Ascending aorta (tissue), 2 donors: ENCODE measurements at regions of chr20 and their contacts with region 1.

Region 1: DNA sequence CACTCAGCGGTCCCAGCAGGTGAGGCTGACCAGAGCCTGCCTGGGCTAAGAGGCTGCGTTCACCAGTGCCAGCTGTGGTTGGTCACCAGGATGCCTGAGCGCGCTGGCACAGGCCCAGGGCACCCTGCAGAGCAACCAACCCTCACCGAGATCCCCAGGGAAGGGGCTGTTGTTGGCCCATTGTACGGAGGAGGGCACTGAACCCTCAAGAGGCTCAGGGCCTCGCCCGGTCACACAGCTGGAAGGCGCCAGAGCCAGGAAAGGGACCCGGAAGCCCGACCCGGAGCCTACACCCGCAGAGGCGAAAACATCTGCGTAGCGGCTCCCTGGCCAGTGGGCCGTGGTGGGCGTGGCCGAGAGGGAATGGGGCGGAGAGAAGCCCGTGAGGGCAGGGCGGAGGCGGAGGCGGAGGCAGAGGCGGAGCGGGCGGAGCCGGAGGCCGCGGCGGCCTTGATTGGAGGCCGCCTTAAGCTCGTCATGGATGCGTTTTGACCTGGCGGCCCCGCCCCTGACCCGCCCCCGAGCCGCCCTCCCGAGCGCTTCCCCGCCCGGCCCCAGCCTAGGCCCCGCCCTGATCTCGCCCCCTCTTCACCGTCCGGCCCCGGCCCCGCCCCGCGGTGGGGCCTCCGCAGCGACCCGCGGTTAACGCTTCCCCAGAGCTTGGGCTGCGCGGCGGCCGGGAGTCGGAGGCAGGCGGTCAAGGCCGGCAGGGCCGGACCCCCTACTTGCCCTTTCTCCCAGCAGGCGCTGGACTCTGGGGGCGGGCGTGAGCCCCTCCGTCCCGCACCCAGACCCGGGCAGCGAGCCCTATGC is 2.2 kb upstream of the MRGBP start:
- DNase-seq: peak; percentile 79 to 97
- H3K4me3 ChIP-seq: peak overlapping the region; percentile 89
- H3K27ac ChIP-seq: peak overlapping the region; percentile 90 to 94
- H3K4me1 ChIP-seq: peaks cover 4 to 15% of the 10 kb centered on the region in 2 donors
- H3K27me3 ChIP-seq: no peaks in the 10 kb centered on the region
- CTCF ChIP-seq: no peak

Region 2: DNA sequence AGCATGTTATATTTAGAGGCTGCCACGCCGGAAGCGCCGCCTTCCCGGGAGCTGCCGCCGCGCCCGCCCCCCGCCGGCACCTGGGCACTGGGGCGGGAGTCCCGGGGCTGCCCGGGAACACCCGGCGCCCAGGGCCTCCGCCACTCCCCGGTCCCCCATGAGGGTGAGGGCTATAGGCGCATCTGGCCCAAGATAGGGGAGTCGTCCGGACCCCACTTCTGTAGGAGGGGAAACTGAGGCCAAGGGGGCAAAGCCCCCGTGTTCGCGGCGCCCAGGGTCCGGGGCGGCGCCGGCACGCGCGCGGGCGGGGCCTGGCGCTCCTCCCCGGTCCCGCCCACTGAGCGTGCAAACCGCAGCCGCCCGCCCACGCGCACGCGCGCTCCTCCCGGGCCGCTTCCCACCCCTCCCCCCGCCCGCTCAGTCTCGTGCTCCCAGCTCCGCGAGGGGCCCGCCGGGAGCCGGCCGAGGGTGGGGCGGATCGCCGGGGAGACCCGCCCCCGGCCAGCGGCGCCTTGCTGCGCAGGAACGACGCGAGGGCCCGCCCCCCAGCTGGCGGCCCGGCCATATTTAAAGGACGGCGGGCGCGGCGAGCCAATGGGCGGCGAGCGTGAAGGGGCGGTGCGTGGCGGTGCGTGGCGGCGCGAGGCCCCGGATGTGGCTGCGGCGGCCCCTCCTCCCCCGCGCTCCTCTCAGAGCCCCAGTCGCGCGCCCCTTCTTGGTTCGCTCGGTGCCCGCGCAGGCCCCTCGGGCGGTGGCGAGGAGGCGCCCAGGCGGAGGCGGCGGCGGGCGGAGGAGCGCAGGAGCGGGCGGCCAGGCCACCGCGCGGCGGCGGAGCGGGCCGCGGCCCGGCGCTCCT is 672.1 kb before region 1 on chr20 and contains the start of gene LSM14B:
- intact Hi-C with region 1: loop called (anchors 5 kb)
- DNase-seq: peak; percentile 84 to 98
- H3K4me3 ChIP-seq: peak within 1 kb of the TSS; percentile 70 to 84
- H3K27ac ChIP-seq: peak within 1 kb of the TSS; percentile 97 to 98
- H3K4me1 ChIP-seq: peaks cover 0 to 26% of the 10 kb centered on the region in 2 donors
- H3K27me3 ChIP-seq: no peaks in the 10 kb centered on the region
- CTCF ChIP-seq: no peak
- total RNA-seq, gene LSM14B: 27.6 TPM

Region 3: DNA sequence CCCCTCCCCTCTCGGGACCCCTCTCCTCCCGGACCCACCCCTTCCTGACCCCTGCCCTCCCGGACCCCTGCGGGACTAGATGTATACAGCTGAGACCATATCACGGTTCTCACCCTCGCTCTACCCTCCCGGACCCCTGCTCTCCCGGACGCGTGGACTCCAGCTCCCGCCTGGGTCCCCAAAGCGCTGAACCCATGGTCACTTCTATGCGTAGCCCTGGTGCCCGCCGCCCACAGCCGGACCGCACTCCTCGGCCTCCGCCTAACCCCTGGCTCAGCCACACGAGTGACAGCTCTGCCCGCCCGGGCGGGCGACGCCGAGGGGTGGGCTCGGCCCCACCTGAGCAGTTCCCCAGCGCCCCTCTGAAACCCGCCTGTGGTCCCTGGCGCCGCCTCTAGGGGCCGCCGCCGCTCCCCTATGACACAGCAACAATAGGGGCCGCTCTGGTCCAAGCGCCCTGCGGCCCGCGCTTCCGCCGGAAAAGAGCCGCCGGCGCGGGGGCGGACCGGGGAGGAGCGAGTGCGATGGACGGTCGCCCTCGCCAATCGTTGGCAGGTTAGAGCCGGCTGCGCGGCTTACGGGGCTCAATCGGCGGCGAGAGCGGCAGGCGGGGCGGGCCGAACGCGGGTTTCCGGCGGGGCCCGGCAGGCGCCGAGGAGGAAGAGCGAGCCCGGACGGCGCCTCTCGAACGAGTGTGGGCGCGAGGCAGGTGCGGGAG is 491.6 kb before region 1 on chr20 and contains the start of gene ADRM1:
- intact Hi-C with region 1: loop called (anchors 1 kb)
- DNase-seq: peak; percentile 82 to 98
- H3K4me3 ChIP-seq: peak within 1 kb of the TSS; percentile 70 to 92
- H3K27ac ChIP-seq: peak within 1 kb of the TSS; percentile 98 to 99
- H3K4me1 ChIP-seq: peaks cover 12 to 20% of the 10 kb centered on the region in 2 donors
- H3K27me3 ChIP-seq: no peaks in the 10 kb centered on the region
- CTCF ChIP-seq: peak; percentile 98 to 99 (median 99)
- total RNA-seq, gene ADRM1: 236 TPM

Region 4: GRCh38 chr20:62500237-62500864 is 293.8 kb before region 1 on chr20:
- intact Hi-C with region 1: loop called (anchors 1 kb)
- DNase-seq: peak in 1 of 2 donors; percentile 80
- H3K4me3 ChIP-seq: no peak overlapping the region
- H3K27ac ChIP-seq: no peak overlapping the region
- H3K4me1 ChIP-seq: no peaks in the 10 kb centered on the region
- H3K27me3 ChIP-seq: peaks cover 4% of the 10 kb centered on the region
- CTCF ChIP-seq: peak; percentile 75 to 90 (median 90)

Region 5: GRCh38 chr20:62808211-62808865 is 14.2 kb after region 1 on chr20:
- intact Hi-C with region 1: loop called (anchors 1 kb)
- DNase-seq: peak in 1 of 2 donors; percentile 84
- H3K4me3 ChIP-seq: no peak overlapping the region
- H3K27ac ChIP-seq: no peak overlapping the region
- H3K4me1 ChIP-seq: peaks cover 16 to 35% of the 10 kb centered on the region in 2 donors
- H3K27me3 ChIP-seq: no peaks in the 10 kb centered on the region
- CTCF ChIP-seq: peak; percentile 87 to 94 (median 90)

Region 6: DNA sequence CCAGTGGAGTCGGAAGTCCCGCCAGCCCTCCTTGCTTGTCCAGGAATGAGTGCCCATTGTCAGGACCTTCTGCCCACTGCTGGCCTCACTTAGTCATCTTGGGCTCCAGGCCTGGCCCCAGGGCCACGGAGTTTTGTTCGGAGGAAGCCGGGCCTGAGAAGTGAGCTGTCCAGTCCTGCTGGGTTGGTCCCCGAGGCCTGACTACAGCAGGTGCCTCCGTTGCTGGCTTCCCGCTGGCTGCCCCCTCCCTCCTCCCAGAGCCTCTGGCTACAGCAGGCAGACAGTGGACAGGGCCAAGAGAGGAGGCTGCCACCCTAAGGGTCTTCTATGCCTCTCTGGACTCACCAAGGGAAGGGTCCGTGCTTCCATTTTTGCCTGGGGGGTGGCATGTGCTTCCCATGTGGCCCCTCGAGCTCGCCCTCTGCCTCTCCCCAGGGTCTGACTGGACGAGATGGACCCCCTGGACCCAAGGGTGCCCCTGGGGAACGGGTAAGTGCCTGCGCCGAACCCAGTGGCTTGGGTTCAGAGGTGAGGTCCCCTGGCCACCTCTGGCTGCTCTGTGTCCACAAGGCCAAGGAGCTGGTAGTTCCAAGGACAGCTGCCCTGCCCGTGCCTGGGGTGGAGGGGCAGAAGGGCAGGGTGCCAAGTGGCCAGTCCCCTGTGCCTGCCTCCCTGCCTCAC is 25.5 kb after region 1 on chr20:
- intact Hi-C with region 1: no loop called
- DNase-seq: no peak
- H3K4me3 ChIP-seq: no peak overlapping the region
- H3K27ac ChIP-seq: peak overlapping the region; percentile 1 to 5
- H3K4me1 ChIP-seq: peaks cover 26 to 47% of the 10 kb centered on the region in 2 donors
- H3K27me3 ChIP-seq: peaks cover 17% of the 10 kb centered on the region
- CTCF ChIP-seq: no peak

Region 7: GRCh38 chr20:62926239-62927104 is 132.4 kb after region 1 on chr20 and contains the start of gene DIDO1:
- intact Hi-C with region 1: loop called (anchors 5 kb)
- DNase-seq: peak; percentile 52 to 89
- H3K4me3 ChIP-seq: peak within 1 kb of the TSS; percentile 79 to 97
- H3K27ac ChIP-seq: peak within 1 kb of the TSS; percentile 96 to 98
- H3K4me1 ChIP-seq: peaks cover 20 to 63% of the 10 kb centered on the region in 2 donors
- H3K27me3 ChIP-seq: no peaks in the 10 kb centered on the region
- CTCF ChIP-seq: peak; percentile 47 to 83 (median 70)
- total RNA-seq, gene DIDO1: 42.4 TPM

Region 8: DNA sequence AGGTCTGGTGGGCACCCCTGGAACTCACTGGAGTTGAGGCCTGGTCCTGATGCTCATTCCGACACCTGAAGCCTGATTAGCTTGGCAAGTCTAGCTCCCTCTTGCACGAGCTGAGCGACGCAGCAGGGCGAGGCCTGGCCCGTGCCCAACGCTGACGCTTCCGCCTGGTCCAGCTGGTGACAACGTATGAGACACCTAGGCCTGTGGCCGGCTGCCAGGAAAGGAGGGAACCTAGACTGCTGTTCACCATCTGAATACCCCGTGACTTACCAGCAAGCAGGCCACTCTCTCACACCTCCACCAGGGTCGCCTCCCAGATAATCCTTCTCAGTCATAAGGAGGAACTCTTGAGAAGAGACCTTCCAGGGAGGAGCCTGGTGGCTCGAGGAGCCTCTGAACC is 397.3 kb after region 1 on chr20:
- intact Hi-C with region 1: no loop called
- DNase-seq: no peak
- H3K4me3 ChIP-seq: no peak overlapping the region
- H3K27ac ChIP-seq: no peak overlapping the region
- H3K4me1 ChIP-seq: no peaks in the 10 kb centered on the region
- H3K27me3 ChIP-seq: no peaks in the 10 kb centered on the region
- CTCF ChIP-seq: no peak

Region 9: GRCh38 chr20:63864847-63865640 is 1070.9 kb after region 1 on chr20 and contains the start of gene TPD52L2:
- intact Hi-C with region 1: loop called (anchors 10 kb)
- DNase-seq: peak; percentile 95 to 99
- H3K4me3 ChIP-seq: peak within 1 kb of the TSS; percentile 77 to 92
- H3K27ac ChIP-seq: peak within 1 kb of the TSS; percentile 92 to 98
- H3K4me1 ChIP-seq: peaks cover 0 to 22% of the 10 kb centered on the region in 2 donors
- H3K27me3 ChIP-seq: no peaks in the 10 kb centered on the region
- CTCF ChIP-seq: peak in 1 of 3 experiments; percentile 5
- total RNA-seq, gene TPD52L2: 161 TPM